Psoas muscle (tissue), 8 donors: ENCODE measurements at regions of chr17 and their contacts with region 1.

Region 1: DNA sequence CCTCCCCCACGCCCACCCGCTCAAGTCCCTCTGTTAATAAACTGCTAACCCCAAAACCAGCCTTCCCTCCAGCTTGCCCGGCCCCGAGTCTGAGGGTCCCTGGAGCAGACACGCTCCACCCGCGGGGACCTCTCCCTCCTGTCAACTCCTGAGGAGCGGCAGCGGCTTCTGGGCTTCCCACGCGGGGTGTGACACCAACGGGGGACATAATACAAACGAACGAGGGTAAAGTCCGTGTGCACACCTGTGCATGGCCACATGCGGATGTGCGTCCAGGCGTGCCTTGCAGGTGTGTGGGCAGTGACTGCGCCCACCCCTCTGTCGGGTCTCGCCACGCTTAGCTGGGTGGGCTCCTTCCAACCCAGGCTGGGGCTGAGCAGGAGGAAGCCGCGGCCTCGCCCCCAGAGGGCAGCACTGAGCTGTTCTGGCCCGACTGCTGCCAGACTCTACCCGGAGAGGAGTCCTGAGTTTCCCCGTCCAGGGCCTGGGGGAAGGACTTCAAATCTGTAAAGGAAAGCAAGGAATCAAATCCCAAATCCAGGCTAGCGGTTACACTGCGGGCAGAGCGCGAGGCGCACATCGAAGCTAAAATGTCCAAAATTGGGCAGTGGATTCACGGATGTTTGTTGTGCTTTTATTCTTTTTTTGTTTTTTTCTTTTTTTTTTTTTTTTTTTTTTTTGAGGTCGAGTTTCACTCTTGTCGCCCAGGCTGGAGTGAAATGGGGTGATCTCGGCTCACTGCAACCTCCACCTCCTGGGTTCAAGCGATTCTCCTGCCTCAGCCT is 24.2 kb upstream of the KRT17 start:
- DNase-seq: peak; percentile 86 to 93
- ATAC-seq: peak; percentile 95 to 98 (median 96)
- H3K4me3 ChIP-seq: peak overlapping the region; percentile 61
- H3K27ac ChIP-seq: no peak overlapping the region
- H3K4me1 ChIP-seq: peaks cover 9% of the 10 kb centered on the region
- H3K27me3 ChIP-seq: no peaks in the 10 kb centered on the region
- CTCF ChIP-seq: peak; percentile 86

Region 2: GRCh38 chr17:40803617-40804082 is 845.0 kb before region 1 on chr17:
- intact Hi-C with region 1: loop called in 1 of 2 experiments (anchors 5 kb)
- DNase-seq: peak; percentile 62 to 76
- ATAC-seq: peak; percentile 69 to 86 (median 78)
- H3K4me3 ChIP-seq: no peak overlapping the region
- H3K27ac ChIP-seq: no peak overlapping the region
- H3K4me1 ChIP-seq: no peaks in the 10 kb centered on the region
- H3K27me3 ChIP-seq: peaks cover 0 to 65% (median 2%) of the 10 kb centered on the region in 3 donors
- CTCF ChIP-seq: peak; percentile 83

Region 3: DNA sequence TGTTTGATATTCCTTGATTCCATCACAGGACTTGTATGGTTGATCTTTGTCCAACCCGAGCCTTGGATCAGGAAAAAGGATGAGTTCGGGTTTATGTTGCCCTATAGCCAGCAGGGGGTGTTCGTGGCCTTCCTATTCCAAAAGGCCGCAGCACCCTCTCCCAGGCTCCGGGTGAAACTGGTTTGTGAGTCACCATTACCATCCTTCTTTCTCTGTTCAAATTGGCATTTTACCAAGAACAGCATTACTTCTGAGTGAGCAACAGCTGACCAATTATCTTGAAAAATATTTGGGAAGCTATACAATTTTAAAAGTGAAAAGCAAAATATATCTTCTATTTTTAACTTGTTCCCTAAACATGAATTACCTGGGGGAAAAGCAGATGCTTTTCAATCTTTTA is 739.3 kb before region 1 on chr17:
- intact Hi-C with region 1: loop called (anchors 5 kb)
- DNase-seq: peak; percentile 56 to 85
- ATAC-seq: peak; percentile 96 to 98 (median 96)
- H3K4me3 ChIP-seq: no peak overlapping the region
- H3K27ac ChIP-seq: no peak overlapping the region
- H3K4me1 ChIP-seq: peaks cover 17% of the 10 kb centered on the region
- H3K27me3 ChIP-seq: peaks cover 0 to 22% (median 2%) of the 10 kb centered on the region in 3 donors
- CTCF ChIP-seq: peak; percentile 80

Region 4: GRCh38 chr17:41417576-41418015 is 231.0 kb before region 1 on chr17:
- intact Hi-C with region 1: loop called in 1 of 2 experiments (anchors 10 kb)
- DNase-seq: no peak
- ATAC-seq: no peak
- H3K4me3 ChIP-seq: no peak overlapping the region
- H3K27ac ChIP-seq: no peak overlapping the region
- H3K4me1 ChIP-seq: peaks cover 5% of the 10 kb centered on the region
- H3K27me3 ChIP-seq: peaks cover 0 to 2% (median 0%) of the 10 kb centered on the region in 3 donors
- CTCF ChIP-seq: peak; percentile 13

Region 5: GRCh38 chr17:41548844-41549595 is 99.6 kb before region 1 on chr17:
- intact Hi-C with region 1: loop called (anchors 1 to 2 kb)
- DNase-seq: peak; percentile 80 to 89
- ATAC-seq: peak; percentile 83 to 94 (median 88)
- H3K4me3 ChIP-seq: peak overlapping the region; percentile 34
- H3K27ac ChIP-seq: no peak overlapping the region
- H3K4me1 ChIP-seq: peaks cover 6% of the 10 kb centered on the region
- H3K27me3 ChIP-seq: peaks cover 0 to 10% (median 2%) of the 10 kb centered on the region in 3 donors
- CTCF ChIP-seq: peak; percentile 90